HEK293 (cell line): ENCODE measurements at regions of chr1 and their contacts with region 1.

Region 1: GRCh38 chr1:160291248-160292220 is 6.6 kb upstream of the PEX19 start:
- H3K4me3 ChIP-seq: no peak overlapping the region
- H3K27ac ChIP-seq: no peak overlapping the region
- H3K4me1 ChIP-seq: no peaks in the 10 kb centered on the region
- CTCF ChIP-seq: peak; percentile 70

Region 2: DNA sequence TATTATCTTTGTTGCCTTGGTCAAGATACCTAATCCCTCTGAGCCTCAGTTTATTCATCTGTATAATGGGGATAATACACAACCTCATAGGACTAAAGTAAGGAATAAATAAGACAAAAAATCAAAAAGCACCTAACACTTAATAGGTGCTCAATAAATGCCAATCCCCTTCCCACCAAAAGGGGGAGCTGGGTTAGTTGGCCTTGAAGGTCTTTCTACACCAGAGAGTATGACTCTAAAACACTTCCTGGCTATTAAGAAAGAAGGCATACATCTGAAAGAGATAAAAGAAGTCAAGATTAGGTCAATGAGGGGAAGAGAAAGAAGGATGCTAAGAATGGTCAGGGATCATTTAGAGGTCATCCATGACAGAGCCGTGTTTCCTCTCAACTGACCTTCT is 440.1 kb before region 1 on chr1:
- CTCF ChIA-PET with region 1: no interaction called
- POLR2A ChIA-PET with region 1: no interaction called
- H3K4me3 ChIP-seq: no peak overlapping the region
- H3K27ac ChIP-seq: no peak overlapping the region
- H3K4me1 ChIP-seq: 0 out of 2 replicates have a peak, but pooled peaks cover 4% of the 10 kb centered on the region
- CTCF ChIP-seq: no peak

Region 3: DNA sequence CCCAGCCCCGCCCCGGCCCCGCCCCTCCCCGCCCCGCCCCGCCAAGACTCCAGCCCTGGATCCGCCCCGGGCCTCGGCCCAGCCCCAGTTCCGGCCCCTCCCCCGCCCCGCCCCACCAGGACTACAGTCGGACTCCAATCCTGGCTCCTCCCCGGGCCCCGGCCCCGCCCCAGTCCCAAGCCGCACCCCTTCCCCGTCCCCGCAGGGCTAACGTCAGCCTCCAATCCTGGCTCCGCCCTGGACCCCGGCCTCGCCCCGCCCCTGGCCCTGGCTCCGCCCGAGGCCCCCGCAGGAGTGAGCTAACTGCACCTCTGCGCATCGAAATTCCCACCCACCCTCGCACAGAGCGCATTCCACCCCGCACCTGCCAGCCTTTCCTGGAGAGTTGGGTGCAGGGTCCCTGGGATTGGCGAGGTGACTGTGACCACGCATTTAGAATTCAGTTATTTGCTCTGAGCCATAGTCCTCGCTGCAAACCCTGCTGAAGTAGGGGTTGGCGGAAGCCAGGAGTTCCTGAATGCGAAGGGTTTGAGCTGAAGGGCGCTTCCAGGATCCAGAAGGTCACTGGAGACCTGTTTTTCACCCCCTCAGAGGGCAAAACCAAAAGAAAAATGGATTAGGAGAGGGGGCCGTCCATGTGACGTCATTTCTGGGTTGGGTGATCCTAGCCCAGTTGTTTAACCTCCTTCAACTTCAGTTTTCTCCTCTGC is 192.5 kb before region 1 on chr1:
- CTCF ChIA-PET with region 1: interaction called, 108 read pairs
- POLR2A ChIA-PET with region 1: interaction called, 3 read pairs
- H3K4me3 ChIP-seq: peak overlapping the region; percentile 15
- H3K27ac ChIP-seq: no peak overlapping the region
- H3K4me1 ChIP-seq: peaks cover 4% of the 10 kb centered on the region
- CTCF ChIP-seq: no peak

Region 4: DNA sequence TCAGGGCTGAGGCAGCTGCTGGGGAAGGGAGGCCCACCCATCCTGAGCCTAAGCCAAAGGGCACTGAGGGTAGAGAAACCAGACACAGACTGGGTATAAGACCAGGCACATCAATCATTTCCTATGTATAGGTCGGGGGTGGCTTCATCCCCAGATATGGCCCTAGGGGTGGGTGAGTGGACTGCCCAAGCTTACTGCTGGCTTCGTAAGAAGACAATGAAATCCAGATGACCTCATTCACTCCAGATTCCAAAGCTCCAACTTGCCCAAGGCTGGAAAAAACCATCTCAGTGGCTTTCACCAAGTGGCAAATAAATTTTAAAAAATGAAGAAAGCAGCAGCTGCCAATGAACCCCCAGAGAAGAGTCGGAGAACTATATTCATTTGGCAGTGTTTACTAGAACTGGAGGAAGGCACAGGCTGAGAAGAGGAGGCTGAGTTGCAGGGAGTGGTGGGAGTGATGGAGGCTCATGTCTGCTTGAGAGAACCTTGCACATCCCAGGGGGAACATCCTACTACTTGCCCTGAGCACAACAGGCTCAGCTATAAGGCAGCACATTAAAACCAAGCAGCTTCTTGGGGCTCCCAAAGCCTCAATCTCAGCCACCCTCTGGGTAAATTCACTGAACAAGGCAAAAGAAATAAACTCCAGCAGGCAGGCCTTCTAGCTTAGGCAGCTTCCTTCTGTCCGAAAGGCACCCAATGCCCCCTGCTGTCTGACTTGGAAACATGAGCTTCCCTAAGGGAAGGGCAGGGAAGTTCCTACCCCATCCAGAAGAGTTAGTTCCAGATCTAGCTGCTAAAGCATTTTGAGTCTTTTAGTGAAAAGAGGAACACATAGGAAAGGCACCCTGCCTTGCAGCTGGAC is 72.2 kb before region 1 on chr1:
- CTCF ChIA-PET with region 1: interaction called, 13 read pairs
- POLR2A ChIA-PET with region 1: no interaction called
- H3K4me3 ChIP-seq: no peak overlapping the region
- H3K27ac ChIP-seq: no peak overlapping the region; the same call in 1 of the 2 replicates
- H3K4me1 ChIP-seq: no peaks in the 10 kb centered on the region
- CTCF ChIP-seq: peak; percentile 69; the same call in 1 of the 2 replicates

Region 5: DNA sequence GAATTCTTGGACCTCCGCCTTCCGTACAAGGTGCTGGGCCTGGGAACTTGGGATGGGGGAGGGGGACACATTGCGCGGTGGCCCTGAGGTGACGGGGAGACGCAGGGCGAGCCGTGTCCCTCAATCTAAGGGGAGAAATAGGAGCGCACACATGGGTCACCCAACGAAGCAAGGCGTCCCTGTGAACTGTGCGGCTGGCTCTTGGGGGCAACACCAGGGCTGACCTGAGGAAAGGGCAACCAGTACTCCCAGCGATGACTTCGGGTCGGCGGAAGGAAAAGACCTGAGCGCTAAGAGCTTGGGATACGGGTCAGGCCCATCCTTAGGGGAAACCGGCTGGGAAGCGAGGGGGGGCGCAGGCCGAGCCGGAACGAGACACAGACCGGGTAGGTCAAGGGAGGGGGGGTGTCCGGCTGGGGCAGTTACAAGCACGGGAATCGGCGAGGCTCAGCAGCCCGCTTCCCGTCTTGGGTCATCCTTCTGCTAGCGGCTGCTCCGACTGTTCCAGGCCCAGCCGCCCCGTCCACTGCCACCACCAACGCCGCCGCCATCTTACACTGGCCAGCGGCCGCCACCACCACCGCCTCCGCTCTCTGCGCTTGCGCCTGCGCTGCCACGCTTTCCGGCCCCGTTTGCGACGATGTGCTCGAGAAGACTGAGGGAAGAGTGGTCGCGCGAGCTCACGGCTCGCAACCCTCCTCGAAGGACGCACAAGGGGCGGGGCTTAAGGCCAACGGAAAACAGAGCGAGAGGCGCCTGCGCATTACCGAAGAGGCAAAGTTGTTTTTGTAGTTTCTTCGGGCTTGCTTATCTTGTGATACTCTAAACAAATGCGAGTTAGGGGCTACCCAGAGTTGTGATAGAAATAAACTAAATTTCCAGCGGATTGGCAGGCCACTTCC is 29.4 kb before region 1 on chr1 and contains the start of gene DCAF8:
- CTCF ChIA-PET with region 1: interaction called, 35 read pairs
- POLR2A ChIA-PET with region 1: interaction called, 10 read pairs
- H3K4me3 ChIP-seq: peak within 1 kb of the TSS; percentile 94
- H3K27ac ChIP-seq: peak within 1 kb of the TSS; percentile 92
- H3K4me1 ChIP-seq: peaks cover 25% of the 10 kb centered on the region
- CTCF ChIP-seq: no peak; the same call in none of the 2 replicates

Region 6: DNA sequence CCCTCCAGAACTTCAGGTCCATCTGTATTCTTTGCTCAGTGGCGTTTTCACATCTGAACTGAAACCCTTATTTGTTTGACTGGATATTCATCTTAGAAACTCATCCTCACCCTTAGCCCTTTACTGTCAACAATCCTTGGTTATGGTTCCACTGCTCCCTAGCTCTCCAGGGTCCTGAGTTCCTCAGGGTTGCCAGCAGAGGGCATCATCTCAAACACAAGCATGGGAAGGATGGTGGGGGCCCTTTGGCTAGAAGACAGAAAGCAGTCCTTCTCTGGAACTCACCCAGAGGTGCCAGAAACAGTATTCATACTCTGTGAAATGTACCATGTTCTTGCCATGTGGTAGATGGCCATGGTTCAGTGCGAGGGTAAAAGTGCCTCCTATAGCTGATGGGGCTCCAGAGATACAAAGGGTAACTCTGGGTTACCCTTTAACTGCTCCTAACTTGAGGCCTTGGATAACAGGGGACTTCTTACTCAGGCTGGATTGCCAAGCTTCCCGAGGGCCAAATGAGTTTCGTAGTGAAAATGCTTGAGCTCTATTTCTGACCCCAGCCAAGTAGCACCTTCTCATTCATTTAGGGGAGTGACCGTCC is 63.0 kb after region 1 on chr1:
- CTCF ChIA-PET with region 1: interaction called, 10 read pairs
- POLR2A ChIA-PET with region 1: no interaction called
- H3K4me3 ChIP-seq: no peak overlapping the region
- H3K27ac ChIP-seq: no peak overlapping the region
- H3K4me1 ChIP-seq: no peaks in the 10 kb centered on the region
- CTCF ChIP-seq: 0 out of 2 replicates have a peak, but pooled peaks have one; percentile 53